Activated naive CD4-positive, alpha-beta T cell treated with anti-CD3 and anti-CD28 coated beads for 36 hours (primary cell): ENCODE measurements at regions of chr1 and their contacts with region 1.

Region 1: DNA sequence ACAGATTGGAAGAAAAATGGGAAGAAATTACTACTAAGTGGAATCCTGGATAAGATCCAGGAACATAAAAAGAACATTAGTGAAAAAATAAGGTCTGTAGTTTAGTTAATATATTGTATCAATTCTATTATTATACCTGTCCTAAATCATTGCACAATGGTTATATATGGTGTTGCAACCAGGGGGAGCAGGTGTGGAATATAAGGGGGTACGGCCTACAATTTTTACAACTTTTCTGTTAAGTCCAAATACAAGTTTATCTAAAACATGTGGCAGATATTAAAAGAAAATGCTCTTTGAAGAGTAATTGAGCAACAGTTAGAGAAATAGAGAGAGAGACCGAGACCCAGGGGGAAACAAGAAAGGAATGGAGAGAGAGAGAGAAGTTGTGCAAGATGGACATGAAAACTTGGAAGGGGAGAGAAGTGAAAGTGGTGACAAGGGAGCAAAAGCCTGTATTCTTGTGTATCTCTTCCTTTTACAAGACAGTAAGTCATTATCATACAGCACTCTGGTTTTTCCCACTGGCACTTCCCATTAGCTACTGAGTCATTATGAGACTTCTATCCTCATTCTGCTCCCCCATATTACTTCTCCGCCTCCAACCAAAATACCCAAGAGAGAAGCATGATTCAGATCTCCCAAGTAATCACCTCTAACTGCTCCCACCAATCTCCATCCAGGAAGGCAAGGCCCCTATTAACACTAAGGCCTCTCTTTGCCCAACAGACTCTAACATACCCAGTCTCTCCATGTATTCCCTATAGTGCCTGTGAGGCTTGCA is 22.3 kb upstream of the TRAF3IP3 start:
- DNase-seq: peak; percentile 35
- H3K4me3 Mint-ChIP-seq: peak overlapping the region; percentile 33
- H3K27ac Mint-ChIP-seq: peak overlapping the region; percentile 80
- H3K4me1 Mint-ChIP-seq: peaks cover 55% of the 10 kb centered on the region
- H3K27me3 Mint-ChIP-seq: no peaks in the 10 kb centered on the region

Region 2: DNA sequence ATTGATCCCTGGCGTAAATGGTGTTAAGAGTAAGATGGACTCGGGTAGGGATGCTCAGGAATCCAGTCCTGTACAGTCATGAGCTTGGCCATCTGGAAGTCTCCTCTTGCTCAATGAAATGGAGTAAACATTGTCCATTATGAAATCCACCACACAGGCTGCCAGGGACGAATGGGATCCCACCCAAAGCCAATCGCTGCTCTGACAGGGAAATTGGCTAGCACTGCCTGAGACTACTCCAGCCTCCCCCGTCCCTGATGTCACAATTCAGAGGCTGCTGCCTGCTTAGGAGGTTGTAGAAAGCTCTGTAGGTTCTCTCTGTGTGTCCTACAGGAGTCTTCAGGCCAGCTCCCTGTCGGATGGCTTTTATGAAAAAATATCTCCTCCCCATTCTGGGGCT is 29.0 kb before region 1 on chr1 and contains the start of gene HSD11B1:
- CTCF ChIA-PET with region 1: interaction called, 4 read pairs
- intact Hi-C with region 1: loop called (anchors 1 kb)
- DNase-seq: no peak
- H3K4me3 Mint-ChIP-seq: peak within 1 kb of the TSS; percentile 58
- H3K27ac Mint-ChIP-seq: peak within 1 kb of the TSS; percentile 94
- H3K4me1 Mint-ChIP-seq: peaks cover 81% of the 10 kb centered on the region
- H3K27me3 Mint-ChIP-seq: no peaks in the 10 kb centered on the region
- total RNA-seq, gene HSD11B1: 6.7 to 8.0 TPM